ENCODE measurements at regions of chr1 and their contacts with region 1.

Region 1: GRCh38 chr1:28736450-28737306 is at the start of gene YTHDF2:
- DNase-seq: peak; percentile 94 to 97
- H3K4me3 ChIP-seq: peak within 1 kb of the TSS; percentile 88 to 97 (median 94)
- H3K27ac ChIP-seq: peak within 1 kb of the TSS; percentile 98
- H3K4me1 ChIP-seq: peaks cover 0 to 11% (median 3%) of the 10 kb centered on the region in 4 experiments; a peak in 6 of 7 replicates
- H3K27me3 ChIP-seq: no peaks in the 10 kb centered on the region
- CTCF ChIP-seq: peak; percentile 73 to 84 (median 83)
- EP300 ChIP-seq: peak in 1 of 2 experiments; percentile 76; a peak in 1 of 3 replicates
- POLR2A ChIP-seq: peak; percentile 27 to 91
- RAD21 ChIP-seq: peak; percentile 29 to 34
- total RNA-seq, gene YTHDF2: 159 and 164 TPM in 2 replicates

Region 2: DNA sequence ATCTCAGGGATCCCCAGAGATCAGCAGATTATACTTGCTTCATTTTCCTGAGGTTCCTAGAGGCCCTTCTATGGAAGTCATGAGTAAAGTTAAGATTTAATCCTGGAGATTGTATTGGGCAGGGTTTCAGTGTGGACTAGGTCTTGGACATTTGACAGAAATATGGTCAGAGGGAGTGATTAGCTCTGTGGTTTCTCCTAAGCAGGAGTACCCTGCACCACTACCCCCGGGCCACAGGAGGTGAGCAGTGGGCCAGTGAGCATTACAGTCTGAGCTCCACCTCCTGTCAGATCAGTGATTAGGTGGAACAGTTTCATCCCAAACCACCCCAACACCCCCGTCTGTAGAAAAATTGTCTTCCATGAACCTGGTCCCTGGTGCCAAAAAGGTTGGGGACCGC is 323.9 kb before region 1 on chr1:
- CTCF ChIA-PET with region 1: no interaction called
- POLR2A ChIA-PET with region 1: no interaction called
- DNase-seq: no peak
- H3K4me3 ChIP-seq: no peak overlapping the region
- H3K27ac ChIP-seq: no peak overlapping the region
- H3K4me1 ChIP-seq: peaks cover 1 to 8% (median 3%) of the 10 kb centered on the region in 4 experiments; a peak in 5 of 7 replicates
- H3K27me3 ChIP-seq: no peaks in the 10 kb centered on the region
- CTCF ChIP-seq: 0 out of 4 replicates have a peak, but pooled peaks of 1 of the 3 experiments have one; percentile 9
- EP300 ChIP-seq: no peak
- POLR2A ChIP-seq: no peak
- RAD21 ChIP-seq: no peak; a peak in 1 of 4 replicates

Region 3: DNA sequence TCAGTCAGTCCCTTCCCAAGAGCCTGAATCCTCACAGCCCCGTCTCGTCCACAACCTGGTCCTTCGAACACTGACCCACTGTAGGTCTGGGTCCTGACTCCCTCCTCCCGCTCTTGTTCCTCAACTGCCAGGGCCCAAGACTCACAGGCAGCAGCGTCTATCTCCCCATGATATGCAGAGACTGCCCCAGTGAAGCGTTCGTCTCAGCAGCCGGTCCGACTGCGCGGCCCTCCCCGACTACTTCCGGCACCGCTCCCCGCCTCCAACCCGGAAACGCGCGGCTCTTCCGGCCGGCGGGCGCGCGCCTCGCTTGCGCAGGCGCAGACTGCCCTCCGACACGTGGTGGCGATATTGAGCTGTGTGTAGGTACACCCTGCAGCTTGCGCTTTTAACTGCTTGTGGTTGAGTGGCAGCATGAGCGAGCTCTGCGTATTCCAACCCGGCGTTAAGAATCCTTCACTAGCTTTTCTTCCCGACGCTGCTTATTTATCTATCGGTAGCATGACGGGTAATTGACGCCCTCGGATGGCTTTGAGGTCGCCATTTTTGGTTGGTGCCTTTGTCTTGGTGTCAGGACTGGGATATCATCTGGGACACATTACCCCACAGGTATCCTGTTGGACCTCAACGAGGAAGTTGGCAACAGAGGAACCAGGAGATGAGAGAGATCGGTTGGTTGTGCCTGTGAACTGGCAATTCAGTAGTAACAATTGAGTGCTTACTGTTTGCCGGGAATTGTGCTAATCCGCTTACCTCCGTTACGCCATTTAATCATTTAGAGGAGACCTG is 93.6 kb before region 1 on chr1 and contains the start of gene TAF12:
- CTCF ChIA-PET with region 1: interaction called, 6 read pairs
- POLR2A ChIA-PET with region 1: interaction called, 38 read pairs
- DNase-seq: peak; percentile 87 to 92
- H3K4me3 ChIP-seq: peak within 1 kb of the TSS; percentile 73 to 95 (median 86)
- H3K27ac ChIP-seq: peak within 1 kb of the TSS; percentile 84
- H3K4me1 ChIP-seq: peaks cover 0 to 5% (median 4%) of the 10 kb centered on the region in 4 experiments; a peak in 3 of 7 replicates
- H3K27me3 ChIP-seq: no peaks in the 10 kb centered on the region
- CTCF ChIP-seq: peak; percentile 52 to 59 (median 59)
- EP300 ChIP-seq: no peak
- POLR2A ChIP-seq: peak; percentile 92 to 94
- RAD21 ChIP-seq: peak; percentile 58 to 64
- total RNA-seq, gene TAF12: 23.7 and 27.2 TPM in 2 replicates

Region 4: DNA sequence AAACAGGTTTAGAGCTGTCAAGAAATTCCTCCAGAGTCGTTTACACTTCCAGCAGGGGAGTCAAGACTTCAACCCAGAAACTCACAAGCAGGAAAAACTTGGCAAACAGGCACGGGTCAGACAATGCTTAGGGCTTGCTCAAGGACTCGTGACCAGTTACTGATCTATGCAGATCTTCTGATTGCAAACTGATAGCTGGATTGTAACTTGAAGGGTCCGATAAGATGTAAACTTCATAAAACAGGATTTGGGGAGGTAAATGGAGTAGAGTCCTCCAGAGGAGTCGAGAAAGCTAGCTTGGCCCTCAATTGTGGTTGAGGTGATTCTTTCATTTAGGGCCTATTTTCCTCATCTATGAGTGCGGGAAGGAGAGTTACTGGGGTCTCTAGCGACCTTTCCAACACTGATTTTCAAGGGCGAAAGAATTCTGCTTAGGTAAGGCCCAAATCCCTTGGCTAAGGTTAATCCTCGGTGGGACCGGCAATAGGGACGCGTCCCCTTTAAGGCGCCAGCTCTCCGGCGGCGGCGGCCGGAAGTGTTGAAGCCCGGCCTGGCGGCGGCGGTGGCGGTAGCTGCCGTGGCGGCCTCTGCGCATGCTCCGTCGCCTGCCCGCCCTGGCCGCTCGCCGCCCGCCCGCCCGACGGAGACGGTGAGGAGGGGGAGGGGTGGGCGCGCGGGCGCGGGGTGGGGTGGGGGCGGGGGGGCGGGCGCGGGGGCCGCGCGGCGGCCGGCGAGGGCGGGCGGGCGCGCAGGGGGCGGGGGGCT is 68.3 kb before region 1 on chr1 and contains the start of gene GMEB1:
- CTCF ChIA-PET with region 1: interaction called, 12 read pairs
- POLR2A ChIA-PET with region 1: interaction called, 20 read pairs
- DNase-seq: peak in 1 of 2 experiments; percentile 83
- H3K4me3 ChIP-seq: peak within 1 kb of the TSS; percentile 77 to 94 (median 79)
- H3K27ac ChIP-seq: peak within 1 kb of the TSS; percentile 87
- H3K4me1 ChIP-seq: peaks cover 4 to 15% (median 7%) of the 10 kb centered on the region in 4 experiments; a peak in 5 of 7 replicates
- H3K27me3 ChIP-seq: no peaks in the 10 kb centered on the region
- CTCF ChIP-seq: no peak
- EP300 ChIP-seq: no peak
- POLR2A ChIP-seq: peak in 1 of 2 experiments; percentile 23; a peak in 1 of 3 replicates
- RAD21 ChIP-seq: no peak
- total RNA-seq, gene GMEB1: 26.2 and 28.1 TPM in 2 replicates

Region 5: DNA sequence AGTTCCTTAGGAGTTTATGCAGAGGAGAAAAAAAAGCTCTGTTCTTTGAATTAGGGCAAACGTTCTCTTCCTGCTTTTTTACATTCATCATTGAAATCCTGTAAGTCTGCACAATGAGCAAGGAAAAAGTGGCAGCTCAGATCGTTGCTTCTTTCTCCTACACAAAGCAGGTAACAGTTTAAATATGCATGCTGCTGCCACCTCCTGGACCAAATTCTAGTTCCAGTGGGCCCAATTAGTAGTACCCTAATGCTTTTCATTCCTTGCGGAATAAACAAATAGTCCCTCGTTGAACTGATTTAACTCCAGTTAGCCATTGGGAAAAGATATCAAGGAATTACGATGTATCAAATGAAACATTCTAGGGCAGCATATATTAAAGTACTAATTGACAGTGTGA is 20.2 kb after region 1 on chr1:
- CTCF ChIA-PET with region 1: interaction called, 6 read pairs
- POLR2A ChIA-PET with region 1: interaction called, 369 read pairs
- DNase-seq: no peak
- H3K4me3 ChIP-seq: no peak overlapping the region
- H3K27ac ChIP-seq: no peak overlapping the region
- H3K4me1 ChIP-seq: peaks cover 0 to 9% (median 1%) of the 10 kb centered on the region in 4 experiments; a peak in 2 of 7 replicates
- H3K27me3 ChIP-seq: no peaks in the 10 kb centered on the region
- CTCF ChIP-seq: peak in 2 of 3 experiments; percentile 15 to 51; a peak in 2 of 4 replicates
- EP300 ChIP-seq: no peak
- POLR2A ChIP-seq: no peak
- RAD21 ChIP-seq: peak in 1 of 2 experiments; percentile 37; a peak in 2 of 4 replicates

Region 6: GRCh38 chr1:28840928-28841544 is 104.4 kb after region 1 on chr1:
- CTCF ChIA-PET with region 1: no interaction called
- POLR2A ChIA-PET with region 1: no interaction called
- DNase-seq: no peak
- H3K4me3 ChIP-seq: no peak overlapping the region
- H3K27ac ChIP-seq: no peak overlapping the region
- H3K4me1 ChIP-seq: no peaks in the 10 kb centered on the region; a peak in 1 of 7 replicates
- H3K27me3 ChIP-seq: no peaks in the 10 kb centered on the region; a peak in 1 of 7 replicates
- CTCF ChIP-seq: peak in 2 of 3 experiments; percentile 3 to 24; a peak in 2 of 4 replicates
- EP300 ChIP-seq: no peak
- POLR2A ChIP-seq: no peak
- RAD21 ChIP-seq: no peak; a peak in 1 of 4 replicates